Right ventricle myocardium inferior (tissue), 1 donor: ENCODE measurements at regions of chr22 and their contacts with region 1.

Region 1: GRCh38 chr22:35749808-35750207 is 32.1 kb downstream of the APOL5 start:
- DNase-seq: no peak
- ATAC-seq: no peak

Region 2: GRCh38 chr22:35430897-35431322 is 318.9 kb before region 1 on chr22:
- intact Hi-C with region 1: loop called (anchors 10 kb)
- DNase-seq: peak; percentile 93
- ATAC-seq: peak; percentile 97

Region 3: GRCh38 chr22:35840302-35840739 is 90.5 kb after region 1 on chr22:
- intact Hi-C with region 1: loop called (anchors 5 kb)
- DNase-seq: peak; percentile 90
- ATAC-seq: peak; percentile 81

Region 4: DNA sequence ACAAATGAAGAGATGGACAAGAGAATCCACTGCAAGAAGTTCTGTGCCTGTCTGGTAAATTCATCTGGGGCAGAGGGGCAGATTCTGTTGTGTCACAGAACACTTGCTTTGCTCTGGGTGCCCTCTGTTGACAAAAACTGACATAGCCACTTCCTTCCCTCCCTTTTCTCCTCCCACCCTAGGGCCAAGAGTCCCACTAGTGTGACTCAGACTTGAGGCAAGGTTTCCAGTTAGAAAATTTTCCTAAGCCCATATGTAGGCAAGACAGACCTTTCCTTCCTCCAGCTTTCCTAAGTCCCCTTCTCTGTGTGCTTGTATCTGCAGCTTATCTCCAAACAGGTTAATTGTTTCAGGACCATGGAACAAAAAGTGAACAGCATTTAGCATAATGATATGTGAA is 172.0 kb after region 1 on chr22:
- intact Hi-C with region 1: loop called (anchors 5 kb)
- DNase-seq: no peak
- ATAC-seq: peak; percentile 92